ENCODE measurements at regions of chr1 and their contacts with region 1.

Region 1: GRCh38 chr1:150162862-150163706 is 13.4 kb downstream of the PLEKHO1 start:
- DNase-seq: no peak
- ATAC-seq: peak; percentile 76
- H3K4me3 ChIP-seq: no peak overlapping the region
- H3K4me3 Mint-ChIP-seq: peak overlapping the region; percentile 12 to 72 (median 55)
- H3K27ac ChIP-seq: no peak overlapping the region
- H3K27ac Mint-ChIP-seq: peak overlapping the region in 8 of 9 donors; percentile 14 to 85 (median 58)
- H3K4me1 ChIP-seq: peaks cover 0 to 31% of the 10 kb centered on the region in 2 donors
- H3K4me1 Mint-ChIP-seq: peaks cover 39 to 73% (median 51%) of the 10 kb centered on the region in 7 donors
- H3K27me3 ChIP-seq: no peaks in the 10 kb centered on the region
- H3K27me3 Mint-ChIP-seq: peaks cover 0 to 9% (median 0%) of the 10 kb centered on the region in 5 donors

Region 2: GRCh38 chr1:150149271-150150132 is 13.6 kb before region 1 on chr1 and contains the start of gene PLEKHO1:
- CTCF ChIA-PET with region 1: interaction called, 15 read pairs
- POLR2A ChIA-PET with region 1: interaction called, 78 read pairs
- intact Hi-C with region 1: loop called (anchors 2 kb)
- DNase-seq: peak; percentile 53 to 84 (median 65)
- ATAC-seq: peak; percentile 86
- H3K4me3 ChIP-seq: peak within 1 kb of the TSS; percentile 89
- H3K4me3 Mint-ChIP-seq: peak within 1 kb of the TSS; percentile 89 to 99 (median 96)
- H3K27ac ChIP-seq: peak within 1 kb of the TSS; percentile 77
- H3K27ac Mint-ChIP-seq: peak within 1 kb of the TSS; percentile 87 to 99 (median 97)
- H3K4me1 ChIP-seq: peaks cover 21 to 38% of the 10 kb centered on the region in 2 donors
- H3K4me1 Mint-ChIP-seq: peaks cover 42 to 79% (median 74%) of the 10 kb centered on the region in 7 donors
- H3K27me3 ChIP-seq: no peaks in the 10 kb centered on the region
- H3K27me3 Mint-ChIP-seq: peaks cover 0 to 26% (median 0%) of the 10 kb centered on the region in 5 donors
- total RNA-seq, gene PLEKHO1: 64.9 to 111 (median 94.1) TPM

Region 3: DNA sequence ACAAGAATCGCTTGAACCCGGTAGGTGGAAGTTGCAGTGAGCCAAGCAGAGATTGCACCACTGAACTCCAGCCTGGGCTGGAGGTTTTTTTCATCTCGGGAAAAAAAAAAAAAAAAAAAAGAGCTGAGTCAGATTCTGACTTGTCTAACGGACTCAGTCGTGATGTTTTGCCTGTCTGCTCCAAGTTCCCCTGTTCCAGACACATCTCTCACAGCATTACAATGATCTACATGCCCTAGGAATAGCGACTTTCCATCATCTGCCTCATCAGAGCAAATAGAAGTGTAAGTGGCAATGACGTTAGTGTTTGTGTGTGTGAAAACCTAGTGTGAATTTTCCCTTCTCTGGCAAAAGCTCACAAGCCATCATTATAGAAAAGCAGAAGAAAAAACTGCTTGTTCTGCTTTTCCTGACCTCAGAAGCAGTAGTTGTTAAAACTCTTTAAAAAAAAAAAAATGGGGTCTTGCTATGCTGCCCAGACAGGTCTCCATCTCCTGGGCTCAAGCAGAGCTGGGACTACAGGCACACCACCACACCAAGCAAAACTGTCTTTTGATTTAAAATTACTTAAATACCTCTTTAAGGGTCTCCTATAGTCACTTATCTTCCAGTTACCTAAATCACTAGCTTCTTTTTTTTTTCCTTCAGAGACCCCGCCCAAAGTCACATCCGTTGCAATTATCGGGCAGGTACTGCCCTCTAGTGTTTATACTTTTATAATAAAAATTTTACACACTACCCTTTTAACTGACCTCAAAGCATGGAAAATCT is 23.9 kb after region 1 on chr1:
- CTCF ChIA-PET with region 1: interaction called, 14 read pairs
- POLR2A ChIA-PET with region 1: no interaction called
- intact Hi-C with region 1: loop called in 1 of 2 experiments (anchors 1 kb)
- DNase-seq: peak in 7 of 9 donors; percentile 28 to 77 (median 68)
- ATAC-seq: peak; percentile 87
- H3K4me3 ChIP-seq: no peak overlapping the region
- H3K4me3 Mint-ChIP-seq: peak overlapping the region in 7 of 10 donors; percentile 6 to 74 (median 35)
- H3K27ac ChIP-seq: no peak overlapping the region
- H3K27ac Mint-ChIP-seq: peak overlapping the region in 7 of 9 donors; percentile 9 to 70 (median 33)
- H3K4me1 ChIP-seq: peaks cover 0 to 4% of the 10 kb centered on the region in 2 donors
- H3K4me1 Mint-ChIP-seq: peaks cover 7 to 13% (median 10%) of the 10 kb centered on the region in 7 donors
- H3K27me3 ChIP-seq: no peaks in the 10 kb centered on the region
- H3K27me3 Mint-ChIP-seq: no peaks in the 10 kb centered on the region

Region 4: GRCh38 chr1:150293433-150294168 is 130.5 kb after region 1 on chr1 and contains the start of gene MRPS21:
- CTCF ChIA-PET with region 1: no interaction called
- POLR2A ChIA-PET with region 1: no interaction called
- intact Hi-C with region 1: no loop called
- DNase-seq: peak; percentile 64 to 88 (median 83)
- ATAC-seq: peak; percentile 99
- H3K4me3 ChIP-seq: peak within 1 kb of the TSS; percentile 76
- H3K4me3 Mint-ChIP-seq: peak within 1 kb of the TSS; percentile 85 to 97 (median 92)
- H3K27ac ChIP-seq: peak within 1 kb of the TSS; percentile 92
- H3K27ac Mint-ChIP-seq: peak within 1 kb of the TSS; percentile 92 to 100 (median 98)
- H3K4me1 ChIP-seq: peaks cover 10 to 14% of the 10 kb centered on the region in 2 donors
- H3K4me1 Mint-ChIP-seq: peaks cover 20 to 45% (median 32%) of the 10 kb centered on the region in 7 donors
- H3K27me3 ChIP-seq: no peaks in the 10 kb centered on the region
- H3K27me3 Mint-ChIP-seq: no peaks in the 10 kb centered on the region
- total RNA-seq, gene MRPS21: 47.9 to 72.8 (median 67.5) TPM

Region 5: GRCh38 chr1:150464422-150464826 is 301.3 kb after region 1 on chr1:
- CTCF ChIA-PET with region 1: no interaction called
- POLR2A ChIA-PET with region 1: no interaction called
- intact Hi-C with region 1: no loop called
- DNase-seq: peak; percentile 36 to 76 (median 70)
- ATAC-seq: peak; percentile 90
- H3K4me3 ChIP-seq: no peak overlapping the region
- H3K4me3 Mint-ChIP-seq: peak overlapping the region in 1 of 10 donors; percentile 29
- H3K27ac ChIP-seq: no peak overlapping the region
- H3K27ac Mint-ChIP-seq: peak overlapping the region in 7 of 9 donors; percentile 12 to 86 (median 52)
- H3K4me1 ChIP-seq: no peaks in the 10 kb centered on the region
- H3K4me1 Mint-ChIP-seq: peaks cover 0 to 5% (median 5%) of the 10 kb centered on the region in 7 donors
- H3K27me3 ChIP-seq: no peaks in the 10 kb centered on the region
- H3K27me3 Mint-ChIP-seq: no peaks in the 10 kb centered on the region

Measured in naive thymus-derived CD4-positive, alpha-beta T cell (primary cell).